ENCODE measurements at regions of chr15 and their contacts with region 1.

Region 1: GRCh38 chr15:51380999-51381795 is 39.7 kb downstream of the GLDN start:
- DNase-seq: peak; percentile 60

Region 2: GRCh38 chr15:51162865-51163762 is 218.1 kb before region 1 on chr15:
- in situ Hi-C with region 1: no loop called
- DNase-seq: peak; percentile 55

Region 3: GRCh38 chr15:51281368-51281967 is 99.7 kb before region 1 on chr15:
- in situ Hi-C with region 1: loop called (anchors 25 kb)
- DNase-seq: peak; percentile 34

Region 4: GRCh38 chr15:51470512-51470911 is 89.3 kb after region 1 on chr15:
- in situ Hi-C with region 1: no loop called
- DNase-seq: no peak

Measured in ACHN (cell line).